ENCODE measurements at regions of chr11 and their contacts with region 1.

Region 1: GRCh38 chr11:88849368-88849767 is 216.4 kb downstream of the GRM5 start:
- DNase-seq: no peak
- ATAC-seq: no peak
- H3K4me3 ChIP-seq: no peak overlapping the region
- H3K4me3 Mint-ChIP-seq: no peak overlapping the region
- H3K27ac ChIP-seq: no peak overlapping the region
- H3K27ac Mint-ChIP-seq: no peak overlapping the region
- H3K4me1 ChIP-seq: peaks cover 4 to 14% of the 10 kb centered on the region in 2 donors
- H3K4me1 Mint-ChIP-seq: peaks cover 7 to 38% (median 26%) of the 10 kb centered on the region in 7 donors
- H3K27me3 ChIP-seq: no peaks in the 10 kb centered on the region
- H3K27me3 Mint-ChIP-seq: peaks cover 0 to 5% (median 0%) of the 10 kb centered on the region in 5 donors

Region 2: GRCh38 chr11:88655196-88655595 is 194.2 kb before region 1 on chr11:
- CTCF ChIA-PET with region 1: no interaction called
- POLR2A ChIA-PET with region 1: no interaction called
- intact Hi-C with region 1: no loop called
- DNase-seq: no peak
- ATAC-seq: no peak
- H3K4me3 ChIP-seq: no peak overlapping the region
- H3K4me3 Mint-ChIP-seq: no peak overlapping the region
- H3K27ac ChIP-seq: no peak overlapping the region
- H3K27ac Mint-ChIP-seq: no peak overlapping the region
- H3K4me1 ChIP-seq: no peaks in the 10 kb centered on the region
- H3K4me1 Mint-ChIP-seq: peaks cover 0 to 27% (median 12%) of the 10 kb centered on the region in 7 donors
- H3K27me3 ChIP-seq: no peaks in the 10 kb centered on the region
- H3K27me3 Mint-ChIP-seq: no peaks in the 10 kb centered on the region

Region 3: GRCh38 chr11:88704485-88704884 is 144.9 kb before region 1 on chr11:
- CTCF ChIA-PET with region 1: no interaction called
- POLR2A ChIA-PET with region 1: no interaction called
- intact Hi-C with region 1: loop called in 1 of 2 experiments (anchors 5 kb)
- DNase-seq: no peak
- ATAC-seq: no peak
- H3K4me3 ChIP-seq: no peak overlapping the region
- H3K4me3 Mint-ChIP-seq: no peak overlapping the region
- H3K27ac ChIP-seq: no peak overlapping the region
- H3K27ac Mint-ChIP-seq: peak overlapping the region in 1 of 9 donors; percentile 22
- H3K4me1 ChIP-seq: no peaks in the 10 kb centered on the region
- H3K4me1 Mint-ChIP-seq: peaks cover 0 to 9% (median 0%) of the 10 kb centered on the region in 7 donors
- H3K27me3 ChIP-seq: no peaks in the 10 kb centered on the region
- H3K27me3 Mint-ChIP-seq: no peaks in the 10 kb centered on the region

Region 4: GRCh38 chr11:88799771-88800500 is 49.4 kb before region 1 on chr11:
- CTCF ChIA-PET with region 1: no interaction called
- POLR2A ChIA-PET with region 1: no interaction called
- intact Hi-C with region 1: loop called in 1 of 2 experiments (anchors 10 kb)
- DNase-seq: no peak
- ATAC-seq: no peak
- H3K4me3 ChIP-seq: no peak overlapping the region
- H3K4me3 Mint-ChIP-seq: no peak overlapping the region
- H3K27ac ChIP-seq: no peak overlapping the region
- H3K27ac Mint-ChIP-seq: no peak overlapping the region
- H3K4me1 ChIP-seq: peaks cover 0 to 3% of the 10 kb centered on the region in 2 donors
- H3K4me1 Mint-ChIP-seq: peaks cover 0 to 20% (median 11%) of the 10 kb centered on the region in 7 donors
- H3K27me3 ChIP-seq: no peaks in the 10 kb centered on the region
- H3K27me3 Mint-ChIP-seq: no peaks in the 10 kb centered on the region

Measured in naive thymus-derived CD4-positive, alpha-beta T cell (primary cell).